PC-3 (cell line): ENCODE measurements at regions of chr13 and their contacts with region 1.

Region 1: GRCh38 chr13:52348983-52349780 is 56.8 kb downstream of the THSD1 start:
- DNase-seq: peak; percentile 69
- ATAC-seq: peak; percentile 84
- H3K4me3 ChIP-seq: no peak overlapping the region
- H3K27ac ChIP-seq: peak overlapping the region; percentile 18
- H3K4me1 ChIP-seq: peaks cover 13% of the 10 kb centered on the region
- H3K27me3 ChIP-seq: no peaks in the 10 kb centered on the region
- CTCF ChIP-seq: no peak

Region 2: DNA sequence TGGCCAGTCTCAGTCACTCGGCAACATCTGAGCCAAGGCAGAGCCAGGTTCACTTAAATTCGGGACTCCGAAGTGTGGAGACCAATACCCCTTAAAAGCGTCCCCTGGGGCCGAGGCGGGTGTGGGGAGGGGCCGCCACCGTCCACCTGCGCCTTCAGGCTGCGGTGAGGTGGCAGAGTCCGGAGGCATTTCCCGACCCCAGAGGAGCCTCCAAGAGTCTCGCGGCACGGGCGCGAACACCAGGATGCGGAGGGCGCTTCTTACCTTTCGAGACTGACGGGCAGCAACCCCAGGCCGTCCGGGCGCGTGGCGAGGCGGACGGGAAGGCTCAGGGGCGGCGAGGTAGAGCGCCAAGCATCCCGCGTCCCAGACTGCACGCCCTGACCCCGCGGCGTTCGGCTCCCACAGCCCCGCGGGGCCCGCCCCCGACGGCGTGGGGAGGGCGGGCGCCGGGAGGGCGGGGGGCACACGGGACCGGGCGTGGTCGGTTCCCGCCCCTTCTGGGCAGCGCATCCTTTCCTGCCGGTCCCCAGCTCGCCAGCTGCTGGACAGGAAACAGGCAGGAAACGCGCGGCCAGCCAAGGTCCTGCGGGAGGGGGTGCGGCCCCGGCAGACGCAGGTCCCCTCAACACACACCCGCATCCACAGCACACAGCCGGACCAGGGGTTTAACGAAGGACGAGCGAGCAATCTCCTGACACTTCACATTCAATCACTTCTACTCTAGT is 56.7 kb after region 1 on chr13 and contains the start of gene THSD1:
- CTCF ChIA-PET with region 1: no interaction called
- POLR2A ChIA-PET with region 1: no interaction called
- intact Hi-C with region 1: loop called (anchors 10 kb)
- DNase-seq: peak; percentile 31
- ATAC-seq: peak; percentile 72
- H3K4me3 ChIP-seq: peak within 1 kb of the TSS; percentile 82
- H3K27ac ChIP-seq: no peak within 1 kb of the TSS
- H3K4me1 ChIP-seq: peaks cover 4% of the 10 kb centered on the region; the same call in 1 of the 2 replicates
- H3K27me3 ChIP-seq: no peaks in the 10 kb centered on the region
- CTCF ChIP-seq: no peak
- total RNA-seq, gene THSD1: 1.0 and 1.3 TPM in 2 replicates

Region 3: DNA sequence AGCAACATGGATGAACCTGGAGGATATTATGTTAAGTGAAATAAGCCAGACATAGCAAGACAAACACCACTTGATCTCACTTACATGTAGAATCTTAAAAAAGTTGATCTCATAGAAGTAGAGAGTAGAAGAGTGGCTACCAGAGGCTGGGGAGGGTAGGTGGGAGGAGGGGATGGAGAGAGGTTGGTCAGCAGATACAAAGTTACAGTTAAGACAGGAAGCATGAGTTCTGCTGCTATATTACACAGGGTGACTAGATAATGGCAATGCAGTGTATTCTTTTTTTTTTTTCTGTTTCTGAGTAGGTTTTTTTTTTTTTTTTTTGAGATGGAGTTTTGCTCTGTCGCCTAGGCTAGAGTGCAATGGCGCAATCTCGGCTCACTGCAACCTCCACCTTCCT is 72.0 kb after region 1 on chr13:
- CTCF ChIA-PET with region 1: no interaction called
- POLR2A ChIA-PET with region 1: no interaction called
- intact Hi-C with region 1: no loop called
- DNase-seq: no peak
- ATAC-seq: no peak
- H3K4me3 ChIP-seq: no peak overlapping the region
- H3K27ac ChIP-seq: no peak overlapping the region
- H3K4me1 ChIP-seq: no peaks in the 10 kb centered on the region
- H3K27me3 ChIP-seq: no peaks in the 10 kb centered on the region
- CTCF ChIP-seq: no peak

Region 4: GRCh38 chr13:52862358-52863206 is 513.4 kb after region 1 on chr13:
- CTCF ChIA-PET with region 1: no interaction called
- POLR2A ChIA-PET with region 1: no interaction called
- intact Hi-C with region 1: no loop called
- DNase-seq: peak; percentile 15
- ATAC-seq: no peak
- H3K4me3 ChIP-seq: no peak overlapping the region
- H3K27ac ChIP-seq: no peak overlapping the region
- H3K4me1 ChIP-seq: no peaks in the 10 kb centered on the region
- H3K27me3 ChIP-seq: no peaks in the 10 kb centered on the region
- CTCF ChIP-seq: peak; percentile 61

Region 5: DNA sequence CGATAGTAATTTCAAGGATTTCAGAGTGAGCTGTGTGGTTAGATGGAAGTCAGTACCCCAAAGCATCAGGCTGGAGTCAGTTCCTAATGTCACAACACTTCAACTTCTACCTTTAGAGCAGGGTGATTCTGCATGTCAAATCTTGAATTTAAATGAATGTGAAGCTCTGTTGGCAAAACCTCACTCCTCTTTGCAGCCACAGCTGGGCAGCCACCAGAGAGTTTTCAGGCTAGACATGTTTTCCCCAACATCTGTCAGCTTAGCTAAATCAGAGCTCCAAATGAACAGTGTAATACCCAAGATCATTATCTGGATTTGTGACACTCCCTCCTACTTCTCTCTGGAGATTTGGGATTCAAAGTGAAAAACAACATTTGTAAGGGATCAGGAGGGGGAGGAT is 645.7 kb after region 1 on chr13:
- CTCF ChIA-PET with region 1: no interaction called
- POLR2A ChIA-PET with region 1: no interaction called
- intact Hi-C with region 1: no loop called
- DNase-seq: no peak
- ATAC-seq: no peak
- H3K4me3 ChIP-seq: no peak overlapping the region
- H3K27ac ChIP-seq: no peak overlapping the region
- H3K4me1 ChIP-seq: no peaks in the 10 kb centered on the region
- H3K27me3 ChIP-seq: no peaks in the 10 kb centered on the region
- CTCF ChIP-seq: no peak